PC-9 (cell line): ENCODE measurements at regions of chr22 and their contacts with region 1.

Region 1: GRCh38 chr22:39319270-39320022 is at the start of gene RPL3:
- DNase-seq: peak; percentile 94 to 96
- H3K4me3 ChIP-seq: peak within 1 kb of the TSS; percentile 94
- H3K27ac ChIP-seq: peak within 1 kb of the TSS; percentile 98
- H3K4me1 ChIP-seq: peaks cover 24% of the 10 kb centered on the region
- H3K27me3 ChIP-seq: no peaks in the 10 kb centered on the region
- CTCF ChIP-seq: no peak; the same call in 1 of the 2 replicates
- total RNA-seq, gene RPL3: 1,699 and 2,252 TPM in 2 replicates

Region 2: GRCh38 chr22:38766076-38766777 is 553.2 kb before region 1 on chr22:
- CTCF ChIA-PET with region 1: no interaction called
- POLR2A ChIA-PET with region 1: interaction called, 3 read pairs
- intact Hi-C with region 1: loop called (anchors 5 kb)
- DNase-seq: peak; percentile 79 to 89
- H3K4me3 ChIP-seq: no peak overlapping the region
- H3K27ac ChIP-seq: no peak overlapping the region
- H3K4me1 ChIP-seq: peaks cover 26% of the 10 kb centered on the region
- H3K27me3 ChIP-seq: no peaks in the 10 kb centered on the region
- CTCF ChIP-seq: peak; percentile 98

Region 3: GRCh38 chr22:39013942-39014722 is 305.3 kb before region 1 on chr22 and contains the start of gene APOBEC3C:
- CTCF ChIA-PET with region 1: interaction called, 4 read pairs
- POLR2A ChIA-PET with region 1: no interaction called
- intact Hi-C with region 1: loop called (anchors 2 kb)
- DNase-seq: peak; percentile 89 to 92
- H3K4me3 ChIP-seq: peak within 1 kb of the TSS; percentile 77
- H3K27ac ChIP-seq: peak within 1 kb of the TSS; percentile 65
- H3K4me1 ChIP-seq: peaks cover 27% of the 10 kb centered on the region
- H3K27me3 ChIP-seq: no peaks in the 10 kb centered on the region
- CTCF ChIP-seq: peak; percentile 28; the same call in 1 of the 2 replicates
- total RNA-seq, gene APOBEC3C: 64.6 and 66.5 TPM in 2 replicates

Region 4: GRCh38 chr22:39205338-39206021 is 114.0 kb before region 1 on chr22:
- CTCF ChIA-PET with region 1: no interaction called
- POLR2A ChIA-PET with region 1: interaction called, 12 read pairs
- intact Hi-C with region 1: no loop called
- DNase-seq: peak; percentile 71 to 86
- H3K4me3 ChIP-seq: no peak overlapping the region
- H3K27ac ChIP-seq: peak overlapping the region; percentile 54
- H3K4me1 ChIP-seq: peaks cover 42% of the 10 kb centered on the region
- H3K27me3 ChIP-seq: no peaks in the 10 kb centered on the region
- CTCF ChIP-seq: no peak

Region 5: GRCh38 chr22:39349506-39349966 is 30.1 kb after region 1 on chr22:
- CTCF ChIA-PET with region 1: interaction called, 4 read pairs
- POLR2A ChIA-PET with region 1: interaction called, 12 read pairs
- intact Hi-C with region 1: no loop called
- DNase-seq: peak in 1 of 2 experiments; percentile 28
- H3K4me3 ChIP-seq: peak overlapping the region; percentile 59
- H3K27ac ChIP-seq: no peak overlapping the region
- H3K4me1 ChIP-seq: peaks cover 4% of the 10 kb centered on the region
- H3K27me3 ChIP-seq: peaks cover 12% of the 10 kb centered on the region; the same call in 1 of the 2 replicates
- CTCF ChIP-seq: no peak

Region 6: DNA sequence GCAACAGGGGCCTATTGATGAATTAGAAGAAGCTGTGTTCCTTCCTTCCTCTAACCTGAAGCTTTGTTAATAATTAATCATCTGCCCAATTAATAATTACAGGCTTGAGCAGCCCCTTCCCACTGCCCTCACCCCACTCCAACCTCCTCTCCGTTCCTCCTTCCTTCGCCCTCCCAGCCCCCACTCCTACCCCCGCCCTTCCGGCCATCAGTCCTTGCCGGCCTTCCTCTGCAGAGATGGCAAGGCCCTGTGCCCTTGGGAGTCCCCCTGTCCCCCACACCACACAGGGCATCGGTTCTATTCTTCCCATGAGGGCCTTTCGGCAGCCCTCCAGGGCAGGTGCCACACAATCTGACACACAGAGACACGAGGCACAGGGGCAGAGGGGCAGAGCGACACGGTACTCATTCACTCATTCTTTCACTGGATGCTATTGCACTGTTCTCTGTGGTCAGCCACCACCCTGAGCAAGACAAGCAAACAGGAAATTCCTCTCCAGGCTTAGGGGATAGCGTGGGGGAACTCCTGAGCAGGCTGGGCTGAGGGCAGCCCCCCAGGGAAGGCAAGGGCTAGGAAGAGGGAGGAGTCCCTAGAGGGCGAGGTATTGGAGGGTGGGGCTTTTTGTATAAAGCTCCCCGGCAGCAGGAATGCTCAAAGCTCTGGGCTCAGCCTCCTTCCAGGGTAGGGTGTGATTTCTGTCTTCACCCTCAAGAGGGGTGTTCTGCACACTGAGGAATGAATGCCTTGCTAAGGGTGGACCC is 152.1 kb after region 1 on chr22:
- CTCF ChIA-PET with region 1: no interaction called
- POLR2A ChIA-PET with region 1: no interaction called
- intact Hi-C with region 1: no loop called
- DNase-seq: peak; percentile 58 to 68
- H3K4me3 ChIP-seq: no peak overlapping the region
- H3K27ac ChIP-seq: no peak overlapping the region
- H3K4me1 ChIP-seq: peaks cover 25% of the 10 kb centered on the region
- H3K27me3 ChIP-seq: peaks cover 18% of the 10 kb centered on the region
- CTCF ChIP-seq: no peak

Region 7: GRCh38 chr22:39520054-39520891 is 200.8 kb after region 1 on chr22 and contains the start of gene ATF4:
- CTCF ChIA-PET with region 1: no interaction called
- POLR2A ChIA-PET with region 1: interaction called, 6 read pairs
- intact Hi-C with region 1: loop called (anchors 1 kb)
- DNase-seq: peak; percentile 98
- H3K4me3 ChIP-seq: peak within 1 kb of the TSS; percentile 97
- H3K27ac ChIP-seq: peak within 1 kb of the TSS; percentile 93
- H3K4me1 ChIP-seq: peaks cover 31% of the 10 kb centered on the region
- H3K27me3 ChIP-seq: no peaks in the 10 kb centered on the region
- CTCF ChIP-seq: no peak
- total RNA-seq, gene ATF4: 488 and 588 TPM in 2 replicates

Region 8: GRCh38 chr22:39543095-39543494 is 223.6 kb after region 1 on chr22:
- CTCF ChIA-PET with region 1: no interaction called
- POLR2A ChIA-PET with region 1: no interaction called
- intact Hi-C with region 1: no loop called
- DNase-seq: peak in 1 of 2 experiments; percentile 28
- H3K4me3 ChIP-seq: no peak overlapping the region
- H3K27ac ChIP-seq: no peak overlapping the region
- H3K4me1 ChIP-seq: no peaks in the 10 kb centered on the region
- H3K27me3 ChIP-seq: peaks cover 14% of the 10 kb centered on the region
- CTCF ChIP-seq: peak; percentile 38; the same call in 1 of the 2 replicates